Dorsolateral prefrontal cortex (tissue), 120 donors: ENCODE measurements at regions of chr19 and their contacts with region 1.

Region 1: DNA sequence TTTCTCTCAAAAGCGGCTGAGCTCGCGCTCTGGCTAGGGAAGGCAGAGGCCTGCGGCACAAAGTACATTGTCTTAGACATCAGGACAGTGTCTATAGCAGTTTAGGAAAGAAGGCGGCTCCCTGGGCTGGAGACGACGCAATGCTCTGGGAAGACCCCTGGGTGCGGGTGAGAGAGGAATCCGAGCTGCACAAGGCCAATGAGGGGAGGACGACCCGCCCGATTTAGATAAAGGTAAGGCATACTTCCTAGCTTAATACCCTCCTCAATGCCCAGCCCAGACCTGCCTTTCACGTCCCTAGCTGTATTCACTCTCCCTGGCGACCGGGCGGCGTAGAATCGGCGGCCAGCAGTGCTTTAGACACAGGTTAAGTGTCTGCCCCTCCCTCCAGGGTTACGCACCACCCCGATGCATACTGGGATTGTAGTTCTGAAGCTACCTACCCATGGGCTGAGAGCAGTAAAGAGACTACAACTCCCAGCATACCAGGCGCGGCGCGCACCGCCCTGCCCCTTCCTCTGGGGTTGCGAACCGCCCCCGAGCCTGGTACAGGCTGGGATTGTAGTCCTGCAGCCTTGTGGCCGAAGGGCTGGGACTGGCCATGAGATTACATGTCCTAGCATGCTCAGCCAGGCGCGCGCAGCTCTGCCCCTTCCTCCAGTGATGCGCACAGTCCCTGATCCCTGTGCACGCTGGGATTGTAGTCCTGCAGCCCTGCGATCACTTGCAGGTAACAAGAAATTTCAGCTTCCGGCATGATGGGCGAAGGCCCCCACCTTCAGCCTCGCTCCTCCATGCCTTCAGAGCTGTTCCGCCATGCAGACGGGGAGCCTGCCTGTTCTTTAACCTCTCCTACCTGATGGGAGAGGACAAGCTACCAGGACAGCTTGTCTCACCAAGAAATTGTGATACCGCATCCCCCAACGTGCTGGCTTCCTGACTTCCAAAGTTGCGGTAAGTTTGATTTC is 43.4 kb upstream of the ZNF14 start:
- DNase-seq: peak; percentile 99 to 100 (median 100)
- H3K4me3 ChIP-seq: peak overlapping the region; percentile 64 to 97 (median 85)
- H3K27ac ChIP-seq: peak overlapping the region in 58 of 59 donors; percentile 2 to 90 (median 78)
- H3K27me3 ChIP-seq: no peaks in the 10 kb centered on the region
- CTCF ChIP-seq: peak in 42 of 56 donors; percentile 8 to 62 (median 32)

Region 2: DNA sequence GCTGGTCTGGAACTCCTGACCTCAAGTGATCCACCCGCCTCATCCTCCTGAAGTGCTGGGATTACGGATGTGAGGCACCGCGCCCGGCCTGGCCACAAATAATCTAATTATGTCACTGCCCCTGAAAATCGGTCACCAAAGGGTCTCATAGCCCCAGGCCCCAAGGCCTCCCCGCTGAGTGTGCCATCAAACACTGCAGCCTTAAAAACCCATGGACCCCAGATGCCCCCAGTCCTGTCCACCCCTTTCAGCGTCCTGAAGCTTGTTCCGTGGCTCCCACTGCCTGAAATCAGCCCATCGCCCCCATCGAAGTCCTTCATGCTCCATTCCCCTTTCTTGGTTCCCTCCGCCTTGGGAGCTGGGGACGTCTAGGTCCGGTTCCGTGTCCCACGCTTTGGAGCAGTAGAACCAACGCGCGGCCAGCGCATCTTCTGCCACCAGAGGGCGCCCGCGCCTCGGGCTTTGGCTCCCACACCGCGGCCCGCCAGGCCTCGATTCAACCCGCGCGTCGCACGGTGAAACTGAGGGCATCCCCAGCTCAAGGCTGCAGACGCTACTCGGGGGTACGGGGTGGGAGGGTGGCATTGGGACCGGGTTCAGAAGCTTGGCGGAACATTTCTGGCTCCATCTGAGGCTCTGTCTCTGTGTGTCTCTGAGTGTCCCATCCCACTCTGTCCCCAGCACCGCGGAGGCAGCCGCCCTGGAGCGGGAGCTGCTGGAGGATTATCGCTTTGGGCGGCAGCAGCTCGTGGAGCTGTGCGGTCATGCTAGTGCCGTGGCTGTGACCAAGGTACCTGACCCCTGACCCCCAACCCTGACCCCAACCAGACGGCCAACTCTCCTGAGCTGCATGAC is 244.1 kb before region 1 on chr19:
- intact Hi-C with region 1: no loop called
- DNase-seq: peak; percentile 78 to 92 (median 87)
- H3K4me3 ChIP-seq: peak overlapping the region in 23 of 59 donors; percentile 5 to 45 (median 23)
- H3K27ac ChIP-seq: peak overlapping the region in 2 of 59 donors; percentile 5 to 42
- H3K27me3 ChIP-seq: no peaks in the 10 kb centered on the region
- CTCF ChIP-seq: peak; percentile 79 to 98 (median 94)

Region 3: DNA sequence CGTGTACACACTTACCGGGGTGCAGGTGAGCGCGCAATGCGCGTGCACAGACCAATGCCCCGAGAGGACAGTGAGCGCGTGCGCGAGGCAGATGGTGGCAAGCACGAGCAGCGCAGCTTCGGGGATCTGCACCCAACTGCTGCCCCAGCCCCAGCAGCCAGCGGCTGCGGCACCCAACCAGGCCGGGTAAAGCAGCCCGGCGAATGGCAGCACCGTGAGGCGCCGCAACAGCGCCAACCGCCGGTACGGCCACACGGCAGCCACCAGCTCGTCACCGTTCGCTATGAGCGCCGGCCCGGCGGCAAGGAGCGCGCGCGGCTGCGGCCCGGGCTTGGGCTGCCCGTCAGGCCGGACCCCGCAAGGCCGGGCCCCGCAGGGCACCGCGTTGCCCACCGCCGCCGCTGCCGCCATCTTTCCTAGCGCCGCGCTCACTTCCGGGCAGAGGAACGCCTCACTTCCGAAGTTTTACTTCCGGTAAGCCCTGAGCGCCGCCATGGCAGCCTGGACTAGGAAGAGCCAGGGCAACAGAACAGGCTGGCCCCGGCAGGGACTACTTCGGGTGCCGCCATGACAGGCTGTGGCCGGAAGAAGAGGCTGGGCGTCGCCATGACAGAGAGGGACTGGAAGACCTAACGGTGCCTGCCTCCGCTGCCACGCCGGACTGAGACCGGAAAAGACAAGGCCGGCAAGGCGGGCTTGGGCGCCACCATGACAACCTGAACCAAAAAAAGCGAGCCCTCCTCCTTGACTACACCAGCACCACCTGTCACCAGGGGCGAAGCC is 112.9 kb before region 1 on chr19 and contains the start of gene ATP13A1:
- intact Hi-C with region 1: loop called (anchors 5 kb)
- DNase-seq: peak; percentile 93 to 98 (median 97)
- H3K4me3 ChIP-seq: peak within 1 kb of the TSS; percentile 76 to 100 (median 97)
- H3K27ac ChIP-seq: peak within 1 kb of the TSS; percentile 81 to 100 (median 97)
- H3K27me3 ChIP-seq: no peaks in the 10 kb centered on the region
- CTCF ChIP-seq: peak in 38 of 56 donors; percentile 3 to 61 (median 32)
- total RNA-seq, gene ATP13A1: 45.7 to 107 (median 68.6) TPM

Region 4: GRCh38 chr19:19732579-19733501 is 43.5 kb before region 1 on chr19 and contains the start of gene ZNF14:
- intact Hi-C with region 1: loop called in 1 of 2 experiments (anchors 2 kb)
- DNase-seq: peak; percentile 86 to 96 (median 94)
- H3K4me3 ChIP-seq: peak within 1 kb of the TSS; percentile 31 to 100 (median 95)
- H3K27ac ChIP-seq: peak within 1 kb of the TSS in 53 of 59 donors; percentile 1 to 92 (median 76)
- H3K27me3 ChIP-seq: no peaks in the 10 kb centered on the region
- CTCF ChIP-seq: peak in 25 of 56 donors; percentile 1 to 46 (median 20)
- total RNA-seq, gene ZNF14: 6.8 to 18.5 (median 11.9) TPM

Region 5: DNA sequence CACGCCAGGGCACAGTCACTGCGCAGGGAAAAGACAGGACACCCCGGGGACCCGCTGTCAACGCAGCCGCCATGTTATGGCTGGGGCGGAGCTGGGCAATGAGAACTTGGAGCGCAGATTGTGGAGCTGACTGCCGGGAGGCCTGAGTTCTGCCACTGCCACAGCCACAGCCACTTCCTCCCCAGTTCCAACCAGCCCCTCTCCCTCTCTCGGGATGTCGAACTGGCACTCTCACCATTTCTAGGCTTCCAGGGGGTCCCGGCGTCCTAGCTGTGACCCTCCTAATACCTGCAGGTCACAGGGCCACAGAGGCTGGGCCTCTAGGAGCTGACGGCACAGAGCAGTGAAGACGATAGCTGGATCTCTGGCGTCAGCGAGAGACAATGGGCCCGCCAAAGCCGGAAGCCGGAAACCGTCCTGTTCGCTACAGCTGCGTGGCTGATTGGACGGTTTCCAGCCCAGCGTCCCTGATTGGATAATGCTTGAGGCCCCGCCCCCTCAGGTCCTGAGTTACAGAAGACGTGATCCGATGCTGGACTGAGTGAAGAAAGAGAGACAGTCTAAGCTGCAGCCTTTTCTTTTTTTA is 45.1 kb after region 1 on chr19 and contains the start of gene ZNF506:
- intact Hi-C with region 1: loop called in 1 of 2 experiments (anchors 5 kb)
- DNase-seq: peak; percentile 95 to 100 (median 99)
- H3K4me3 ChIP-seq: peak within 1 kb of the TSS; percentile 59 to 98 (median 85)
- H3K27ac ChIP-seq: peak within 1 kb of the TSS; percentile 74 to 97 (median 91)
- H3K27me3 ChIP-seq: no peaks in the 10 kb centered on the region
- CTCF ChIP-seq: peak in 15 of 56 donors; percentile 7 to 34 (median 16)
- total RNA-seq, gene ZNF506: 25.9 to 56.3 (median 37.0) TPM

Region 6: DNA sequence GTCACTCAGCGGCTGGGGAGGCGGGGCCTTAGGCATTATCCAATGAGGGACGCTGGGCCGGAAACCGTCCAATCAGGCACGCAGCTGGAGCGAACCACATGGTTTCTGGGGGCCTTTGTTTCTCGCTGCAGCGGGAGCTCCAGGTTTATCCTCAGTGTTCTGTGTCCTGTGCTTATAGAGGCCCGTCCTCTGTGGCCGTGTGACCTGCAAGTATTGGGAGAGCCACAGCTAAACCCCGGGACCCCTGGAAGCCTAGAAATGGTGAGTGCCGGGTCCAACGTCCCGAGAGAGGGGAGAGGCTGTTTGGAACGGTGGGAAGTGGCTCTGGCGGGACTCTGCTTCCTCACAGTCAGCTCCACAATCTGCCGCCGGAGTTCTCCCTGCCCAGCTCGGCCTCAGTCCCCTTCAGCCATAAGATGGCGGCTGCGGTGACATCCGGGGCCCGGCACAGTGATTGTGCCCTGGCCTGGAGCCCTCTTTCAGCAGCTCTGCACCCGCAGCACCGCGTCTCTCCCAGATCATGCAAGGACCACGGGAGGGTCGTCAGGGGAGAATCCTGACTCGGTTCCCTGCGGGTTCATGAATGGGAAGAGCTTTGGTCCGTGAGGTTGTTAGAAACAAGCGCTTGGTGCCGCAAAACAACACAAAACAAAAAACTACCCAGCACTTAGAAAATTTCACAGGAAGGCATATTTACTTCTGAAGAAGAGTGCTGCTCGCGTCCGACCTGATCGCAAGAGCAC is 89.6 kb after region 1 on chr19 and contains the start of gene ZNF253:
- intact Hi-C with region 1: loop called (anchors 5 kb)
- DNase-seq: peak; percentile 96 to 99 (median 98)
- H3K4me3 ChIP-seq: peak within 1 kb of the TSS; percentile 56 to 97 (median 85)
- H3K27ac ChIP-seq: peak within 1 kb of the TSS; percentile 75 to 99 (median 95)
- H3K27me3 ChIP-seq: no peaks in the 10 kb centered on the region
- CTCF ChIP-seq: peak in 6 of 56 donors; percentile 8 to 22 (median 14)
- total RNA-seq, gene ZNF253: 14.3 to 34.6 (median 21.3) TPM

Region 7: DNA sequence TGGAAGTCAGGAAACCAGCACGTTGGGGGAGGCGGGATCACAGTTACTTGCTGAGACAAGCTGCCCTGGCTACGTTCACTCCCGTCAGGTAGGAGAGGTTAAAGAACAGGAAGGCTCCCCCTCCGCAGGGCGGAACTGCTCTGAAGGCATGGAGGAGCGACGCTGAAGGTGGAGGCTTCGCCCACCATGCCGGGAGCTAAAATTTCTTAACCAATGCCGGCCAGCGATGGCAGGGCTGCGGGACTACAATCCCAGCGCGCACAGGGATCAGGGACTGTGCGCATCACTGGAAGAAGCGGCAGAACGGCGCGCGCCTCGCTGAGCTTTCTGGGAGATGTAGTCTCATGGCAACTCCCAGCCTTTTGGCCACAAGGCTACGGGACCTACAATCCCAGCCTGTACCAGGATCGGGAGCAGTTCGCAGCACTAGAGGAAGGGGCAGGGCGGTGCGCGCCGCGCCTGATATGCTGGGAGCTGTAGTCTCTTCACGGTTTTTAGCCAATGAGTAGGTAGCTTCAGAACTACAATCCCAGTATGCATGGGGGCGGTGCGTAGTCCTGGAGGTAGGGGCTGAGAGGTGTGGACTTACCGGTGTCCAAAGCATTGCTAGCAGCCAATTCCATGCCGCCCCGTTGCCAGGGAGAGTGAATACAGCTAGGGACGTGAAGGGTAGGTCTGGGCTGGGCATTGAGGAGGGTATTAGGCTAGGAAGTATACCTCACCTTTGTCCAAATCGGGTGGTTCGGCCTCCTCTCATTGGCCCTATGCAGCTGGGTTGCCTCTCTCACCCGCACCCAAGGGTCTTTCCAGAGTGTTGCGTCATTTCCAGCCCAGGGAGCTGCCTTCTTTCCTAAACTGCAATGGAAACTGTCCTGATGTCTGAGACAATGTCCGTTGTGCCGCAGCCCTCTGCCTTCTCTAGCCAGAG is 275.8 kb after region 1 on chr19:
- intact Hi-C with region 1: loop called in 1 of 2 experiments (anchors 5 kb)
- DNase-seq: peak; percentile 95 to 100 (median 99)
- H3K4me3 ChIP-seq: peak overlapping the region; percentile 58 to 95 (median 79)
- H3K27ac ChIP-seq: peak overlapping the region in 56 of 59 donors; percentile 24 to 94 (median 82)
- H3K27me3 ChIP-seq: no peaks in the 10 kb centered on the region
- CTCF ChIP-seq: peak in 43 of 56 donors; percentile 8 to 60 (median 31)